HepG2 (cell line): ENCODE measurements at regions of chr1 and their contacts with region 1.

Region 1: DNA sequence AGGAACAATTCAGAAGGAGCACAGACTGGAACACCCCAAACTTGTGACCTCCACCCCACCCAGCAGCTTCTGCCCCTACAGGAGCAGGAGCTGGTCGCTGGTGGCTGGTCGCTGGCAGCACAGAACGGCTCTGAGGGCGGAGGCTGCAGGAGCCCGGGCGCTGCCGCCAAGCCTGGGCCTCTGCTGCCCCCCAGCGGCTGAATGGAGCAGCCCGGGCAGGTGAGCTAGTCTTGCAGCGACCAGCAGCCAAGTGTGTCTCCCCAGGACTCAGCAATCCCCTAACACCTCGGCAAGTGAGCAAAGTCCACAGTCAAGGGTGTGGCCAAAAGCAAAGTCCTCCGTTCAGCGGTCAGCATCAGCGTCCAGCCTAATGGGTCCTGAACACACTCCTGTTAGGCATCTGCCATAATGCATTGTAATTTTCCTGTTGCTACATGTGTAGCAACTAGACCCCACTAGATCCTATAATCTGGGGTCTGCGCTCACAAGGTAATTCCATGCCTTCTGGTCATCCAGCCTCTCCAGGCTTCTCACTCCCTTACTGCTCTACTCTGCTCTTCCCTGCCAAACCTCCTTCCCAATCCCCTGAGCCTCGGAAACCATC is 12.1 kb upstream of the GJB5 start:
- DNase-seq: peak; percentile 50
- ATAC-seq: peak; percentile 98
- H3K4me3 ChIP-seq: no peak overlapping the region; a peak in 1 of 6 replicates
- H3K27ac ChIP-seq: no peak overlapping the region
- H3K4me1 ChIP-seq: peaks cover 6% of the 10 kb centered on the region; the same call in 1 of the 2 replicates
- H3K27me3 ChIP-seq: peaks cover 4 to 19% of the 10 kb centered on the region in 2 experiments; a peak in 4 of 5 replicates
- CTCF ChIP-seq: peak; percentile 95
- EP300 ChIP-seq: no peak
- POLR2A ChIP-seq: no peak
- RAD21 ChIP-seq: peak; percentile 90

Region 2: DNA sequence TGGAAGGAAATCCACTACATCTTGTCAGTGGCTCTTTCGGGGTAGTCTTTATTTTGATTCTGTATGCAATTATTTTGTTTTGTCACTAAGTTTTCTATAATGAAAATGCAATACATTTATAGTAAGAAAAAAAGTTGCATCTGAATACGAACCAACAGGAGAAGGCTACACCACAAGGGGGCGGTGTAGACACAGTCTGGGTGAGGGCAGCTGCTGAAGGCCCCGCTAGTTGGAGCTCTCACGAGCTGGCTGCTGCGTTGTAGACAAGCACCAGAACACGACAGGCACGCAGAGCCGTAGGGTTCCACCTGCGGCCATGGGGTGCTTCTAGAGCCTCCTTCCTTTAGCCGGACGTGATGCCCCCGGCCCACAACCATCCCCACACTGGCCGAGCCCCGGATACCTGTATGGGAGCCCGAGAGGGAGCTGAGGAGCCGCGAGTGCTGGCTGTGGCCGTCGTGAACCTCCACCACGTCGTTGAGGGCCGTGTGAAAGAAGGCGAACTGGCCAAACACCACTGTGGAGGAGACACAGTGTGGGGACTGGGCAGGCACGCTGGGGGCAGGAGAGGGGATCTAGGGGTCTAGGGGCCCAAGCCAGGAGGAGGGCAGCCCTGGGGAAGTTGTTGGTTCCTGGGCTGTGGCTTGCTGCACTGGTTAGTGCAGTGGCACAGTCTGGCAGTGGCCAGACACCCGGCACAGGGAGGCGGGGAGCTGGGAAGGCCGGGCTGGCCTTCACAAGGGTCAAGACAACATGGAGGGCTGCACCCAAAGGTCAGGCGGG is 1109.6 kb before region 1 on chr1:
- CTCF ChIA-PET with region 1: interaction called, 7 read pairs
- POLR2A ChIA-PET with region 1: no interaction called
- in situ Hi-C with region 1: loop called (anchors 10 kb)
- intact Hi-C with region 1: no loop called
- DNase-seq: peak; percentile 76
- ATAC-seq: peak; percentile 96
- H3K4me3 ChIP-seq: peak overlapping the region in 1 of 3 experiments; percentile 48; a peak in 1 of 6 replicates
- H3K27ac ChIP-seq: no peak overlapping the region
- H3K4me1 ChIP-seq: no peaks in the 10 kb centered on the region
- H3K27me3 ChIP-seq: peaks cover 8 to 53% of the 10 kb centered on the region in 2 experiments
- CTCF ChIP-seq: peak; percentile 94
- EP300 ChIP-seq: no peak
- POLR2A ChIP-seq: no peak
- RAD21 ChIP-seq: peak; percentile 65

Region 3: DNA sequence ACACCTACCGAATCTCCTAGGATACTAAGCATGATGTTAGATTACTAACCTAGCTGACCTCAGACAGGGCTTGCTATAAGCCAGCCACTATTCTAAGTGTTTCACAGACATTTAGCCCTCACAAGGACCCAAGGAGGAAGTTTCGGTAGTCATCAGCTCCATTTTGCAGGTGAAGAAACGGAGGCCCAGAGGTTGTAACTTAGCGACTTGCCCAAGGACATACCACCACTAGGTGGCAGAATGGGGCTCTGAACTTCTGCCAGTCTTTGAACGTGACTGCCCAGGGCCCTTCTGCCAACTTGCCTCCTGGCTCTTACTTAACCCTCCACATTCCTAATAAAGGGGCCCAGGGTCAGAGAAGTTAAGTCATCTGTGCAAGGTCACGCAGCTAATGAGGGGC is 282.6 kb before region 1 on chr1:
- CTCF ChIA-PET with region 1: interaction called, 5 read pairs
- POLR2A ChIA-PET with region 1: no interaction called
- in situ Hi-C with region 1: loop called (anchors 10 kb)
- intact Hi-C with region 1: no loop called
- DNase-seq: peak; percentile 21
- ATAC-seq: no peak; the same call in 2 of the 3 replicates
- H3K4me3 ChIP-seq: no peak overlapping the region
- H3K27ac ChIP-seq: no peak overlapping the region
- H3K4me1 ChIP-seq: no peaks in the 10 kb centered on the region
- H3K27me3 ChIP-seq: peaks cover 0 to under 1% of the 10 kb centered on the region in 2 experiments; a peak in 1 of 5 replicates
- CTCF ChIP-seq: peak; percentile 69
- EP300 ChIP-seq: no peak
- POLR2A ChIP-seq: no peak
- RAD21 ChIP-seq: no peak

Region 4: GRCh38 chr1:34549199-34549598 is 193.6 kb before region 1 on chr1:
- CTCF ChIA-PET with region 1: interaction called, 4 read pairs
- POLR2A ChIA-PET with region 1: no interaction called
- in situ Hi-C with region 1: loop called (anchors 10 kb)
- intact Hi-C with region 1: no loop called
- DNase-seq: peak; percentile 37
- ATAC-seq: peak; percentile 82
- H3K4me3 ChIP-seq: no peak overlapping the region
- H3K27ac ChIP-seq: no peak overlapping the region
- H3K4me1 ChIP-seq: no peaks in the 10 kb centered on the region
- H3K27me3 ChIP-seq: no peaks in the 10 kb centered on the region
- CTCF ChIP-seq: peak; percentile 53
- EP300 ChIP-seq: no peak
- POLR2A ChIP-seq: no peak
- RAD21 ChIP-seq: no peak